ENCODE measurements at regions of chr6 and their contacts with region 1.

Region 1: GRCh38 chr6:108589287-108589791 is 28.6 kb downstream of the FOXO3 start:
- DNase-seq: peak; percentile 78 to 90
- H3K4me3 ChIP-seq: no peak overlapping the region
- H3K27ac ChIP-seq: peak overlapping the region; percentile 45
- H3K4me1 ChIP-seq: peaks cover 75% of the 10 kb centered on the region
- H3K27me3 ChIP-seq: no peaks in the 10 kb centered on the region
- CTCF ChIP-seq: no peak

Region 2: GRCh38 chr6:108622641-108623298 is 33.4 kb after region 1 on chr6:
- CTCF ChIA-PET with region 1: no interaction called
- POLR2A ChIA-PET with region 1: interaction called, 6 read pairs
- intact Hi-C with region 1: loop called (anchors 5 kb)
- DNase-seq: no peak
- H3K4me3 ChIP-seq: no peak overlapping the region
- H3K27ac ChIP-seq: 0 out of 2 replicates have a peak overlapping the region, but pooled peaks have one; percentile 5
- H3K4me1 ChIP-seq: peaks cover 48% of the 10 kb centered on the region
- H3K27me3 ChIP-seq: no peaks in the 10 kb centered on the region
- CTCF ChIP-seq: no peak

Region 3: GRCh38 chr6:108737594-108738546 is 148.5 kb after region 1 on chr6:
- CTCF ChIA-PET with region 1: no interaction called
- POLR2A ChIA-PET with region 1: no interaction called
- intact Hi-C with region 1: loop called (anchors 2 kb)
- DNase-seq: peak; percentile 84 to 99
- H3K4me3 ChIP-seq: peak overlapping the region; percentile 59
- H3K27ac ChIP-seq: peak overlapping the region; percentile 99
- H3K4me1 ChIP-seq: peaks cover 93% of the 10 kb centered on the region
- H3K27me3 ChIP-seq: no peaks in the 10 kb centered on the region
- CTCF ChIP-seq: no peak

Region 4: DNA sequence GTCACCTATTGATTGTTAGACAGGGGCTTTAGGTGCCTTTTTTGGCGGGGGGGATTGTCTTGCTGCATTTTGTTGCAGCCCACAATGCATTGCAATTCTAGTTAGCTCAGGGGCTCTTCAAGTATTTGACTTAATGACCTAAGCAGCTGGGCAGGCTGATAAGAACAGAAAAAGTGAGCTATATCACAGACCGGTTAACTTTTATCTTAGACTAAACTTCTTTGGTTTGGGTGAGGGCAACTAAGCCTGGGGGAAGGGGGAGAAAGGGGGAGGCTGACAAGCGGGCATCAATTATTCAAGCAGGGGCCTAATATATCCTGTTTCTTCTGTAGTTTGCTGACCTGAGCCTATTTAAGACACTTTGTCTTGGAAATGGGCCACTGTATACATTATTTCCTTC is 1322.8 kb after region 1 on chr6:
- CTCF ChIA-PET with region 1: no interaction called
- POLR2A ChIA-PET with region 1: no interaction called
- intact Hi-C with region 1: no loop called
- DNase-seq: no peak
- H3K4me3 ChIP-seq: no peak overlapping the region
- H3K27ac ChIP-seq: no peak overlapping the region
- H3K4me1 ChIP-seq: no peaks in the 10 kb centered on the region
- H3K27me3 ChIP-seq: no peaks in the 10 kb centered on the region
- CTCF ChIP-seq: no peak